T-cell (primary cell): ENCODE measurements at regions of chr16 and their contacts with region 1.

Region 1: DNA sequence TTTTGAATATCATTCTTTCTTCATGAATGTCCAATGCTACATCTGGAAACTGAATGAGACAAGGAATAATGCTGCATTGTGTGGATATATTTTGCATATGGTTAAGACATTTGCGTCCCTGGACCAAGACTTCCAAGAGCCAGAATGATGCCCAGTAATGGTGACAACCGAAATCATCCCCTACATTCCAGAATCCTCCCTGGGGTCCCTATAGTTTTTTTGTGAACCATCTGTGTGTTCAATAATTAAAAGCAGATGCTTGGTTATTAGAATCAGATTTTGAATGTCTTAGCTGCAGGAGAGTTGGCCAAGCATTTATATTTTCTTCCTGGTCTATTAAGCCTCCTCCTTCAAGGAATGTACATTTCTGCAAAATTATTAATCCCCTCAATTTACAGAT is 426.7 kb upstream of the CDH8 start:
- DNase-seq: no peak
- ATAC-seq: no peak
- H3K4me3 ChIP-seq: no peak overlapping the region
- H3K4me3 Mint-ChIP-seq: no peak overlapping the region
- H3K27ac ChIP-seq: no peak overlapping the region
- H3K27ac Mint-ChIP-seq: no peak overlapping the region
- H3K4me1 ChIP-seq: no peaks in the 10 kb centered on the region
- H3K4me1 Mint-ChIP-seq: no peaks in the 10 kb centered on the region
- H3K27me3 ChIP-seq: no peaks in the 10 kb centered on the region
- H3K27me3 Mint-ChIP-seq: no peaks in the 10 kb centered on the region

Region 2: GRCh38 chr16:61344791-61345190 is 1118.2 kb before region 1 on chr16:
- CTCF ChIA-PET with region 1: no interaction called
- POLR2A ChIA-PET with region 1: no interaction called
- DNase-seq: no peak
- ATAC-seq: no peak
- H3K4me3 ChIP-seq: no peak overlapping the region
- H3K4me3 Mint-ChIP-seq: no peak overlapping the region
- H3K27ac ChIP-seq: no peak overlapping the region
- H3K27ac Mint-ChIP-seq: no peak overlapping the region
- H3K4me1 ChIP-seq: no peaks in the 10 kb centered on the region
- H3K4me1 Mint-ChIP-seq: no peaks in the 10 kb centered on the region
- H3K27me3 ChIP-seq: no peaks in the 10 kb centered on the region
- H3K27me3 Mint-ChIP-seq: no peaks in the 10 kb centered on the region

Region 3: DNA sequence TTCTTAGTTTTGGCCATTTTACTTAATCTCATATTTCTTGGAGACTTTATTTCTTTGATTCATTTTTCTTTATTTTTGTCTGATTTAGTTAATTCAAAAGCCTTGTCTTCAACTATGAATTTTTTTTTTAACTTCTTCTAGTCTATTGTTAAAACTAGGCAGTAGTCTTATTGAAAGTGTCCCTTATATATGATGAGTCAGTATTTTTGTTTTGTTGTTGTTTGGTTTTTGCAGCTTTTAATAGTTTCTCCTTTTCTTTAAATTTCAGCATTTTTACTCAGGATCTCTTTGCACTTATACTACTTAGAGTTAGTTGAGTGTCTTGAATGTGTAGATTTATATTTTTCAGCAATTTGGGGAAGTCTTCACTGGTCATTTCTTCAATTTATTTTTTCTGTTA is 331.8 kb after region 1 on chr16:
- CTCF ChIA-PET with region 1: no interaction called
- POLR2A ChIA-PET with region 1: interaction called in 1 of 2 experiments, 11 read pairs
- DNase-seq: no peak
- ATAC-seq: no peak
- H3K4me3 ChIP-seq: no peak overlapping the region
- H3K4me3 Mint-ChIP-seq: no peak overlapping the region
- H3K27ac ChIP-seq: no peak overlapping the region
- H3K27ac Mint-ChIP-seq: no peak overlapping the region
- H3K4me1 ChIP-seq: no peaks in the 10 kb centered on the region
- H3K4me1 Mint-ChIP-seq: no peaks in the 10 kb centered on the region
- H3K27me3 ChIP-seq: no peaks in the 10 kb centered on the region
- H3K27me3 Mint-ChIP-seq: no peaks in the 10 kb centered on the region